ENCODE measurements at regions of chr21 and their contacts with region 1.

Region 1: GRCh38 chr21:44316311-44316771 is 16.5 kb downstream of the PFKL start:
- DNase-seq: no peak
- ATAC-seq: no peak
- H3K4me3 Mint-ChIP-seq: no peak overlapping the region
- H3K27ac Mint-ChIP-seq: peak overlapping the region; percentile 25
- H3K4me1 Mint-ChIP-seq: no peaks in the 10 kb centered on the region
- H3K27me3 Mint-ChIP-seq: no peaks in the 10 kb centered on the region
- CTCF ChIP-seq: no peak

Region 2: DNA sequence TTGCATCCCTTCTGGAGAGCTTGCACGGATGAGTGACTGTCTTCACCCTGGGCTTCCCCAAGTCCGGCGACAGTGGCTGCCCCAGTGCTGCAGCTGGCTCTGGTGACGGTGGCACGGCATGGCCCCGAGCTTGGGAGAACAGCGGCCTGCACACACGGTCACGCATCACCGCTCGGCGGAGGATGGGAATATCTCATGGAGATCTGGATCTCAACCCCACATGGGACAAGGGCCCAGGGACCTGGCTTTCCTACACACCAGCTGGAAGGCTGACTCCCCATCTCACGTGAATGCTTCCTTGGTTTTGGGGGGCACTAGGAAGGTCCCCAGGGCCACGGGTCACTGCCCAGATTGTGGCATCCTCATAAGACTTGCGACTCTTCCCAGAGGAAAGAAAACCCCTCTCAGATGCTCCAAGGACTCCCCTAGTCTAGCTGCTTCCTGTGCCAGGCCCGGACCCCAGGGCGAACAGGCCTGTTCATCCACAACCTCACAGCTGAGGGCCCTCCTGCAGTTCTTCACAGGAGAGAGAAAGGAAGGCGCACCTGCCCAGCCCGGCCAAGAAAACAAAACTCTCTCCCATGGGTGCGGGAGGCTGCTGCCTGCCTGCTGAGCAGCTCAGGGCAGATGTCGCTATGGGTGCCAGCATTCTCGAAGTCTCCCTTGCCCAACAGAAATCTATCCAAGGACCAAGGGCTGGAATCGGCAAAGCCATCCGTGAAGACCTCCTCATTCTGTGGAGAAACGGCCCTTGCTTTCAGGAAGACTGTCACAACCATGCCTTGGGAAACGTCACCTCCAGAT is 12.9 kb after region 1 on chr21:
- CTCF ChIA-PET with region 1: interaction called, 3 read pairs
- POLR2A ChIA-PET with region 1: interaction called, 11 read pairs
- intact Hi-C with region 1: no loop called
- DNase-seq: no peak
- ATAC-seq: no peak
- H3K4me3 Mint-ChIP-seq: no peak overlapping the region
- H3K27ac Mint-ChIP-seq: peak overlapping the region; percentile 20
- H3K4me1 Mint-ChIP-seq: no peaks in the 10 kb centered on the region
- H3K27me3 Mint-ChIP-seq: no peaks in the 10 kb centered on the region
- CTCF ChIP-seq: no peak